Tibial artery (tissue), 4 donors: ENCODE measurements at regions of chr19 and their contacts with region 1.

Region 1: DNA sequence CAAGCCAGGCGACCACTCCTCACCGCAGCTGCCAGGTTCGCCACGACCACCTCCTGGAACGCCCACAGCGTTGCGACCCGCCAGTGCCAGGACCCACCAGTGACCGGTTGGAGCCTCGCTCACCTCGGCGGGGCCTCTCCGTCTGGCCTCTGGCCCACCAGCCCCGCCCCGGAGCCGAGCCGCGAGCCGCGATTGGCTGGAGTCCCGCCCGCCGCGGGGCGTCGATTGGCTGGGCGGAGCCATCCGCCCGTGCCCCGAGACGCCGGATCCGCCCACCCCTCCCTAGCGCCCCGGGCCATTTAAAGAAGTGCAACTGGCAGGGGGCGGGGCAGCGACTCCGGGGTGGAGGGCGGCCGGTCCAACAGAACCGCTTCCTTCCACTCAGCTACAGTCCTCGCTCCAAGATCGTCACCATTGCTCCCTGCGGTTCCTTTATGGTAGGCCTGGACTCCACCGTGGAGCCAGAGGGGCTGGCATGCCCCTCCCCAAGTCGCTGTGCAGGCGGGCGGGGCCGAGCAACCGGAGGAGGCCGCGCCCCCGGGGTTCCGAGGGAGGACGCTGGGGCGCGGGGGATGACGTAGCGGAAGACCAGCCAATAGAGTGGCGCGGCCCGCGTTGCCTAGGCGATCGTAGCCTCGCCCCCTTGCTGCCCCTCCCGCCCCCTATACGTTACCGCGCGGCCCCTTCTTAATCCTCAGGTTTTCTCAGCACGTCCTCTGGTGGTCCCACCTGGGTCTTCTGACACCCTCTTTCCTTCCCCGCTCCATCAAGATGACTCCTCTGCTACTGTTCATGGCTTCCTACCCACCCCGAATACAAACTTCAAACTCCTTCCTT is at the start of gene SERTAD3:
- DNase-seq: peak; percentile 98 to 99
- H3K4me3 ChIP-seq: peak within 1 kb of the TSS; percentile 94 to 95
- H3K27ac ChIP-seq: peak within 1 kb of the TSS; percentile 97 to 98
- H3K4me1 ChIP-seq: peaks cover 0 to 33% (median 24%) of the 10 kb centered on the region in 4 donors
- H3K27me3 ChIP-seq: no peaks in the 10 kb centered on the region
- CTCF ChIP-seq: peak in 1 of 2 experiments; percentile 12

Region 2: DNA sequence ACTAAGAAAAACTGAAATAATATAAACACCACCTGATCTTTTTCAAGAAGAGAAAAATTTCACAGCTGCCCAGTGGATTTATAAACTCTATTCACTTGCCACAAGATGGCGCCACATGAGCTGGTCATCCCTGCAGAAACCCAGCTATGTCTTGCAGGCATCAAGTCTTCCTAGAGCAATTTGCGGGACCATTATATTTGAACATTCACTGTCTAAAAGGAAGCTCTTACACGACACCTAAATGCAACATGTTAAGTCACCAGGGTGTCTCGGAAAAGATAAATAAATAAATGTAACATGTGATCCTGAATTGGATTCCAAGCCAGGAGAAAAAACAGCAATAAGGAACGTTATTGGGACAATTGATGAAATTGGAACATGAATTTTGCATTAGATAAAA is 139.0 kb before region 1 on chr19:
- intact Hi-C with region 1: loop called (anchors 10 kb)
- DNase-seq: peak; percentile 52 to 86
- H3K4me3 ChIP-seq: no peak overlapping the region
- H3K27ac ChIP-seq: no peak overlapping the region
- H3K4me1 ChIP-seq: no peaks in the 10 kb centered on the region
- H3K27me3 ChIP-seq: no peaks in the 10 kb centered on the region
- CTCF ChIP-seq: peak; percentile 72 to 74

Region 3: DNA sequence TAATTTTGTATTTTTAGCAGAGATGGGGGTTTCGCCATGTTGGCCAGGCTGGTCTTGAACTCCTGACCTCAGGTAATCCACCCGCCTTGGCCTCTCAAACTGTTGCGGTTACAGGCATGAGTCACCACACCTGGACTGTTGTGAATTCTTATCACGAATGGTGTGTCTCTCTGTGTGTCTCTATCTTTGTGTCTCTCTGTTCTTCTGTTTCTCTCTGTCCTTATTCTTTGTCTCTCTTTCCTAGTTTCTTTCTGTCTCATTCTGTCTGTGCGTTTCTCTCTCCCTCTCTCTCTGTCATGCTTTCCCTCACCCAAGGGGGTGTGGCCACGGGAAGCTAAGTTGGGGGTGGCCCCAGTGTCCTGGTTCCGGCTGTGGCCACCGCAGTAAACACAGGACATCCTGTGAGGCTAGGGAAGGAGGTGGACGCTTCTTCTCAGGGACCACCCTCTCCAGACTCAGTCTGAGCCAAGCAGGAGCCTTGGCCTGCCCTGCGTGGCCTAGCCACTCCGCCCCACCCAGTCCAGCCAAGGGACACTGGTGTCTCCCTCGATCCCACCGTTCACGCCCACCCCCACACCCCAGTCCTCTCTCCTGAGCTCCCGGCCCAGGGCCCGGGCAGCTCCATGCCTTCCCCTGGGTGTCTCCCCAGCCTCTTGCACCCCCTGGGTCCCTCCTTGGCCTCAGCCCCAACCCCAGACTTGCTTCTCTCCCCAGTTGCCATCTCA is 27.3 kb before region 1 on chr19:
- intact Hi-C with region 1: loop called (anchors 2 kb)
- DNase-seq: peak in 1 of 2 donors; percentile 62
- H3K4me3 ChIP-seq: no peak overlapping the region
- H3K27ac ChIP-seq: peak overlapping the region; percentile 37 to 45
- H3K4me1 ChIP-seq: peaks cover 0 to 14% (median 10%) of the 10 kb centered on the region in 4 donors
- H3K27me3 ChIP-seq: no peaks in the 10 kb centered on the region
- CTCF ChIP-seq: no peak

Region 4: DNA sequence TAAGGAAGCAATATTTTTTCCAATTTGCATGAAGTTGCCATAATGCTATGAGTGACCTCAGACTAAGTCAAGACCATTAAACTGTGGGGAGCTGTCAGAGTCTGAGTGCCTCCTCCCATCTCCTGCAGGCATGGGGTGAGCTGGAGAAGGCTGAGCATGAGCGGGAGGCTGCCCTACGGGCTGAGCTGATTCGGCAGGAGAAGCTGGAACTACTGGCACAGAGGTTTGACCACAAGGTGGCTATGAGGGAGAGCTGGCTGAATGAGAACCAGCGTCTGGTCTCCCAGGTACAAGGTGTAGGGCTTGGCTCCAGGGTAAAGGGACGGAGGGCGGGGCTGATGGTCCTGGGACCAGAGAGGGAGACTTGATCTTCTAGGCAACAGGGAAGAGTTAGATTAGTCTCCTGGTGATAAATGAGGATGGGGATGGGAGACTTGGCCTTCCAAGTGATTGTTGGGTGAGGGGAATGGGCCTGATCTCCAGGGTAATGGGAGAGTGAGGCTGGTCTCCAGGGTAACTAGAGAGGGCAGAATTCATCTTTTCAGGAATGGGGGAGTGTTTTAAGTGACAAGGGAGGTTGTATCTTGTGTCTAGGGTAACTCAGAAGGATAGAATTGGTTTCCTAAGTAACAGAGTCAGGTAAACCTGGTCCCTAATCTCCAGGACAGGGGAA is 58.4 kb after region 1 on chr19:
- intact Hi-C with region 1: no loop called
- DNase-seq: no peak
- H3K4me3 ChIP-seq: no peak overlapping the region
- H3K27ac ChIP-seq: no peak overlapping the region
- H3K4me1 ChIP-seq: no peaks in the 10 kb centered on the region
- H3K27me3 ChIP-seq: no peaks in the 10 kb centered on the region
- CTCF ChIP-seq: no peak